CD4-positive, alpha-beta T cell (primary cell): ENCODE measurements at regions of chr11 and their contacts with region 1.

Region 1: DNA sequence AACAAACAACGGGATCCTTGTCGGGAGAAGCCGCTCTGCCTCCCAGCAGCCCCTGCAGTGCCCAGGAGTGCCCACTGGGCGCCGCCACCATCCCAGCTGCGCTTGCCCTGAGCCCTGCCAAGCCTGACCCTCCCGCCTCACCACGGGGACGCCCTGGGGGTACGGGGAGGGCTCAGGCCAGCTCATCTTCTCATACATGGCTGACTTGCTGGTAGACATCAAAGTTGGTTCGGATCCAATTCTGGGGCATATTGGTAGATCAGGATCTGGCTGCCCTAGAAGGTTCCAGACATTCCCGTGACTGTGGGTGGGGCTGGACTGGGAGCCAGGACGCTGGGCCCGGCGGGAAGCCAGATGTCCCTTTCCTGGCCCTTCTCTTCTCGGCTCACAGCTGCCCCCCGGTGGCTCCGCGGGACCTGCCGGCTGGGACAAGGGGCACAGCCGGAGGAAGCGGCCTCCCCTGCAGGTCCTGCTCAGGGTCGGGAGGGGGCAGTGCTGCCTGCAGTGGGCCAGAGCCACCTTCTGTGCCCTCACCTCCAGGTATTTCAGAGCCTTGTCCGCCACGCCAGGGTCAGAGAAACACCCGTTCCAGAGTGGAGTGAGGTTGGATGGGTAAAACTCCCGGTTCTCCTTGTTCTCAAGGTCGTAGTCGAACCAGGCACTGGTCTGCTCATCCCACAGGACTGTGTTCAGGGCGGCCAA is 10.6 kb upstream of the TREH start:
- DNase-seq: peak; percentile 72 to 92 (median 82)
- ATAC-seq: peak; percentile 88
- H3K4me3 ChIP-seq: peak overlapping the region; percentile 46
- H3K4me3 Mint-ChIP-seq: peak overlapping the region; percentile 77
- H3K27ac ChIP-seq: no peak overlapping the region
- H3K27ac Mint-ChIP-seq: peak overlapping the region; percentile 69
- H3K4me1 ChIP-seq: peaks cover 65% of the 10 kb centered on the region
- H3K4me1 Mint-ChIP-seq: peaks cover 61% of the 10 kb centered on the region
- H3K27me3 ChIP-seq: no peaks in the 10 kb centered on the region
- H3K27me3 Mint-ChIP-seq: no peaks in the 10 kb centered on the region
- CTCF ChIP-seq: peak; percentile 100

Region 2: DNA sequence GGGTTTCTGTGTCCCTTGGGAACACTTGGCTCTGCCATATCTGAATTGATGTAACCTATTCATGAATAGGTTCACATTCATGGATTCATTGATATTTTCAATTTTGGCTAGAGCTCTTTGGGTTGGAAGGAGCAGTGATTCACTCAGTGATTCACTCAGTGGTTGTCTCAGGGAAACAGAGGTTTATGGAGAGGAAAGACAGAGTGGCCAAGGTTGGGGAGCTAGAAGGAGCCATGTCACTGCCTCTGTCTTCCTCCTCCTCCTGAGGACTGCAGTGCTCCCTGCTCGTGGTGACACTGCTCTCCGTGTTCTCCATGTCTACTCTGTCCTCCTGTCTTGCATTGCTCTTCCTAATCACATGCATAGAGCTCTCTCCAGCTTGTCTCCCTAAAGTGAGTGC is 1345.0 kb before region 1 on chr11:
- CTCF ChIA-PET with region 1: no interaction called
- POLR2A ChIA-PET with region 1: no interaction called
- intact Hi-C with region 1: no loop called
- DNase-seq: no peak
- ATAC-seq: no peak
- H3K4me3 ChIP-seq: no peak overlapping the region
- H3K4me3 Mint-ChIP-seq: no peak overlapping the region
- H3K27ac ChIP-seq: no peak overlapping the region
- H3K27ac Mint-ChIP-seq: no peak overlapping the region
- H3K4me1 ChIP-seq: no peaks in the 10 kb centered on the region
- H3K4me1 Mint-ChIP-seq: peaks cover 4% of the 10 kb centered on the region
- H3K27me3 ChIP-seq: no peaks in the 10 kb centered on the region
- H3K27me3 Mint-ChIP-seq: no peaks in the 10 kb centered on the region
- CTCF ChIP-seq: no peak

Region 3: DNA sequence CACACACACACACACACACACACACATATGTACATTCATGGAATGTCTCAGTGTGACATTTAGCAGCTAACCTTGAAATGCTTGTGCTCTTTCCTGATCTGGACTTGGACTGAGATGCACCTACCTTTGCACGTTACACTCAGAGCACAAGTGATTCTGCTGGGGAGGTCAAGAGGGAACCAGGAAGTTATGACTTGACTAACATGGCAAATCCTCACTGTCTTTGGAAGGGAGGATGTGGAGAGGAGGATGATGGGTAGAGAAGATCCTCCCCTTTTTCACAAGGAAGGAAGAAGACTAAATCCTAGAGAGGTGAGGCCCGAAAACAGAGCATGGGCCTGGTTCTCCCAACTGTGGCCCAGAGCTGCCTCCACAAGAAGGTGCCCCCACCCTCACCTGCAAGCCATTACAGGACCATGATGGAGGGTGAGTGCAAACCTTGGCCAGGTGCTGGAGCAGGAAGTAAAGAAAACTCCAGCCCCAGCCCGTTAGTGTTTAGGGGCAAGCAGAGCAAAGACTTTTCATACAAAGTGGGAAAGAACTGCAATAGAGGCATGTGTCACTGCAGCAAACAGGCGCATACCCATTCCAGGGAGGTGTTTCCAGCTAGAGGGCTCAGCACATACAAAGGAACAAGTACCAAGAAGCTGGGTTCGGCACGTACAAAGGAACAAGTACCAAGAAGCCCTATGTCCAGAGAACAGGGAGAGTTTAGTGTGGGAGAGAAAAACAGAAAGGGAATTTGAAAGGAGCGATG is 563.7 kb before region 1 on chr11:
- CTCF ChIA-PET with region 1: no interaction called
- POLR2A ChIA-PET with region 1: no interaction called
- intact Hi-C with region 1: no loop called
- DNase-seq: no peak
- ATAC-seq: no peak
- H3K4me3 ChIP-seq: no peak overlapping the region
- H3K4me3 Mint-ChIP-seq: no peak overlapping the region
- H3K27ac ChIP-seq: no peak overlapping the region
- H3K27ac Mint-ChIP-seq: no peak overlapping the region
- H3K4me1 ChIP-seq: no peaks in the 10 kb centered on the region
- H3K4me1 Mint-ChIP-seq: no peaks in the 10 kb centered on the region
- H3K27me3 ChIP-seq: no peaks in the 10 kb centered on the region
- H3K27me3 Mint-ChIP-seq: peaks cover 8% of the 10 kb centered on the region
- CTCF ChIP-seq: no peak

Region 4: DNA sequence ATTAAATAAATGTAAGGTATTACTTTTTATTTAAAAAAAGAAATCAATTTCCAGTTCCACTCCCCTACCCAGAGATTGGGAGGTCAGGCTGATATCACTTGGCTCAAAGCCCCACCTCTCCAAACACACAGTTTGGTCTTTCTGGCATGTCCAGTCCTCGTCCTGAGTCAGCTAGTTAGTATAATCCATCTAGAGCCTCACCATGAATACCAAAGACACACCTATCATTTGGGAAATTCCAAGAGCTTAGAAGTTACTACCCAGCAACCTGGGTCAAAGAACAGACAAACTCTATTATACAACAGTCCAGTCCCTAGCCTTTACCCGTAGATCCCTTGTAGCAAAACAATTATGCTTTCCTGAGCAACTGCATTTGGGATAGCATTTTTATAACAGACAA is 19.9 kb before region 1 on chr11:
- CTCF ChIA-PET with region 1: interaction called, 11 read pairs
- POLR2A ChIA-PET with region 1: no interaction called
- intact Hi-C with region 1: no loop called
- DNase-seq: no peak
- ATAC-seq: no peak
- H3K4me3 ChIP-seq: no peak overlapping the region
- H3K4me3 Mint-ChIP-seq: no peak overlapping the region
- H3K27ac ChIP-seq: no peak overlapping the region
- H3K27ac Mint-ChIP-seq: no peak overlapping the region
- H3K4me1 ChIP-seq: peaks cover 2% of the 10 kb centered on the region
- H3K4me1 Mint-ChIP-seq: no peaks in the 10 kb centered on the region
- H3K27me3 ChIP-seq: no peaks in the 10 kb centered on the region
- H3K27me3 Mint-ChIP-seq: peaks cover 4% of the 10 kb centered on the region
- CTCF ChIP-seq: no peak

Region 5: GRCh38 chr11:118746988-118747585 is 57.1 kb after region 1 on chr11:
- CTCF ChIA-PET with region 1: interaction called, 8 read pairs
- POLR2A ChIA-PET with region 1: interaction called, 6 read pairs
- intact Hi-C with region 1: loop called (anchors 5 kb)
- DNase-seq: no peak
- ATAC-seq: peak; percentile 25
- H3K4me3 ChIP-seq: no peak overlapping the region
- H3K4me3 Mint-ChIP-seq: no peak overlapping the region
- H3K27ac ChIP-seq: no peak overlapping the region
- H3K27ac Mint-ChIP-seq: peak overlapping the region; percentile 45
- H3K4me1 ChIP-seq: no peaks in the 10 kb centered on the region
- H3K4me1 Mint-ChIP-seq: peaks cover 12% of the 10 kb centered on the region
- H3K27me3 ChIP-seq: no peaks in the 10 kb centered on the region
- H3K27me3 Mint-ChIP-seq: no peaks in the 10 kb centered on the region
- CTCF ChIP-seq: no peak

Region 6: GRCh38 chr11:118783724-118784495 is 93.9 kb after region 1 on chr11:
- CTCF ChIA-PET with region 1: interaction called, 14 read pairs
- POLR2A ChIA-PET with region 1: interaction called, 13 read pairs
- intact Hi-C with region 1: loop called in 1 of 2 experiments (anchors 1 kb)
- DNase-seq: no peak
- ATAC-seq: no peak
- H3K4me3 ChIP-seq: no peak overlapping the region
- H3K4me3 Mint-ChIP-seq: peak overlapping the region; percentile 69
- H3K27ac ChIP-seq: no peak overlapping the region
- H3K27ac Mint-ChIP-seq: peak overlapping the region; percentile 72
- H3K4me1 ChIP-seq: peaks cover 64% of the 10 kb centered on the region
- H3K4me1 Mint-ChIP-seq: peaks cover 69% of the 10 kb centered on the region
- H3K27me3 ChIP-seq: no peaks in the 10 kb centered on the region
- H3K27me3 Mint-ChIP-seq: no peaks in the 10 kb centered on the region
- CTCF ChIP-seq: no peak

Region 7: GRCh38 chr11:118956094-118956846 is 266.3 kb after region 1 on chr11 and contains the start of gene UPK2:
- CTCF ChIA-PET with region 1: interaction called, 7 read pairs
- POLR2A ChIA-PET with region 1: no interaction called
- intact Hi-C with region 1: loop called (anchors 1 to 10 kb)
- DNase-seq: peak; percentile 82 to 95 (median 87)
- ATAC-seq: peak; percentile 99
- H3K4me3 ChIP-seq: no peak within 1 kb of the TSS
- H3K4me3 Mint-ChIP-seq: no peak within 1 kb of the TSS
- H3K27ac ChIP-seq: no peak within 1 kb of the TSS
- H3K27ac Mint-ChIP-seq: no peak within 1 kb of the TSS
- H3K4me1 ChIP-seq: peaks cover 8% of the 10 kb centered on the region
- H3K4me1 Mint-ChIP-seq: no peaks in the 10 kb centered on the region
- H3K27me3 ChIP-seq: no peaks in the 10 kb centered on the region
- H3K27me3 Mint-ChIP-seq: peaks cover 5% of the 10 kb centered on the region
- CTCF ChIP-seq: peak; percentile 90
- total RNA-seq, gene UPK2: 0.27 TPM in 1 of 2 experiments, not detected in the other